Activated naive CD4-positive, alpha-beta T cell treated with anti-CD3 and anti-CD28 coated beads for 36 hours (primary cell): ENCODE measurements at regions of chr17 and their contacts with region 1.

Region 1: GRCh38 chr17:8091033-8091687 is 3.6 kb upstream of the ALOX12B start:
- DNase-seq: no peak
- H3K4me3 Mint-ChIP-seq: no peak overlapping the region
- H3K27ac Mint-ChIP-seq: no peak overlapping the region
- H3K4me1 Mint-ChIP-seq: peaks cover 8% of the 10 kb centered on the region
- H3K27me3 Mint-ChIP-seq: peaks cover 15% of the 10 kb centered on the region

Region 2: GRCh38 chr17:8015236-8015956 is 75.8 kb before region 1 on chr17:
- CTCF ChIA-PET with region 1: no interaction called
- intact Hi-C with region 1: no loop called
- DNase-seq: no peak
- H3K4me3 Mint-ChIP-seq: no peak overlapping the region
- H3K27ac Mint-ChIP-seq: no peak overlapping the region
- H3K4me1 Mint-ChIP-seq: peaks cover 4% of the 10 kb centered on the region
- H3K27me3 Mint-ChIP-seq: peaks cover 6% of the 10 kb centered on the region

Region 3: DNA sequence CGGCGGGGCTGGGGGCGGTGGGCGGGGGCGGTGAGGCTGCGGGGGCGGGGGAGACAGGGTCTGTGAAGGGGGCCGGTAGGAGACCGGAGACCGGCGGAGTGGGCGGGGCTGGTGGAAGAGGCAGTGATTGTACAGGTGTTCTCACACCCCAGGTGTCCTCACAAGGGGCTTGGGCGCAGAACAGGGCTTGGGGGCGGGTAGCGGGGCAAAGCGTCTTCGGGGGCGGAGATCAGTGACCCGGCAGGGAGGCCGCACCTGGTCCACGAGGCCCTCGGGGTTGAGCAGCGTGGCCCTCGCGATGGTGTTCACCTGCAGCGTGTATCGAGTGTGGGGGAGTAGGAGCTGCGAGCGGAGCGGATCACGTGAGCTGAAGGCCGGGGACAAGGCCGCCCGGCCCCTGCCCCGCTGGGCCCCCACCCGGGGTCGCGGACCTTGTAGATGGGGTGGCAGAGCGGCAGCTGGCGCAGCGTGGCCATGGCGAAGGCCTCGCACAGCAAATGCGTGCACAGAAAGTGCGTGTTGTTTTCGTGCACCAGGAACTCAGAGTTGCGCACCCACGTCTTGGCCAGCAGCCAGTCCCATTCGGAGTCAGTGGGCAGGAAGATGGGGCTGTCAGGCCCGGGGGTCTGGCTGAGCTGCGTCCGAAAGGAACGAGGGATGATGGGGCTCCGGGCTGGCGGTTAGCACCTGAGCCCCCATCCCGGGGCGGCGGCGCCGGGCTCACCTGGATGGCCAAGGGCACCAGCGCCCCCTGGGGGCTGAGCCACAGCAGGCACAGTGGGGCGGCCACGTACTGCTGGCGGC is 18.7 kb after region 1 on chr17:
- CTCF ChIA-PET with region 1: interaction called, 93 read pairs
- intact Hi-C with region 1: loop called (anchors 1 kb)
- DNase-seq: peak; percentile 81
- H3K4me3 Mint-ChIP-seq: peak overlapping the region; percentile 34
- H3K27ac Mint-ChIP-seq: no peak overlapping the region
- H3K4me1 Mint-ChIP-seq: peaks cover 2% of the 10 kb centered on the region
- H3K27me3 Mint-ChIP-seq: peaks cover 6% of the 10 kb centered on the region